Activated CD4-positive, alpha-beta T cell treated with anti-CD3 and anti-CD28 coated beads for 36 hours (primary cell): ENCODE measurements at regions of chr1 and their contacts with region 1.

Region 1: GRCh38 chr1:2044510-2045319 is 5.5 kb upstream of the PRKCZ start:
- DNase-seq: peak; percentile 88
- ATAC-seq: peak; percentile 82
- H3K4me3 Mint-ChIP-seq: peak overlapping the region; percentile 44
- H3K27ac Mint-ChIP-seq: no peak overlapping the region
- H3K4me1 Mint-ChIP-seq: peaks cover 21% of the 10 kb centered on the region
- H3K27me3 Mint-ChIP-seq: peaks cover 14% of the 10 kb centered on the region

Region 2: GRCh38 chr1:1683104-1683905 is 361.4 kb before region 1 on chr1:
- CTCF ChIA-PET with region 1: no interaction called
- POLR2A ChIA-PET with region 1: no interaction called
- intact Hi-C with region 1: no loop called
- DNase-seq: no peak
- ATAC-seq: no peak
- H3K4me3 Mint-ChIP-seq: no peak overlapping the region
- H3K27ac Mint-ChIP-seq: no peak overlapping the region
- H3K4me1 Mint-ChIP-seq: peaks cover 36% of the 10 kb centered on the region
- H3K27me3 Mint-ChIP-seq: no peaks in the 10 kb centered on the region

Region 3: GRCh38 chr1:1943834-1944570 is 100.7 kb before region 1 on chr1:
- CTCF ChIA-PET with region 1: interaction called, 9 read pairs
- POLR2A ChIA-PET with region 1: no interaction called
- intact Hi-C with region 1: loop called in 1 of 2 experiments (anchors 1 kb)
- DNase-seq: peak; percentile 79
- ATAC-seq: peak; percentile 98
- H3K4me3 Mint-ChIP-seq: no peak overlapping the region
- H3K27ac Mint-ChIP-seq: no peak overlapping the region
- H3K4me1 Mint-ChIP-seq: peaks cover 3% of the 10 kb centered on the region
- H3K27me3 Mint-ChIP-seq: peaks cover 1% of the 10 kb centered on the region

Region 4: DNA sequence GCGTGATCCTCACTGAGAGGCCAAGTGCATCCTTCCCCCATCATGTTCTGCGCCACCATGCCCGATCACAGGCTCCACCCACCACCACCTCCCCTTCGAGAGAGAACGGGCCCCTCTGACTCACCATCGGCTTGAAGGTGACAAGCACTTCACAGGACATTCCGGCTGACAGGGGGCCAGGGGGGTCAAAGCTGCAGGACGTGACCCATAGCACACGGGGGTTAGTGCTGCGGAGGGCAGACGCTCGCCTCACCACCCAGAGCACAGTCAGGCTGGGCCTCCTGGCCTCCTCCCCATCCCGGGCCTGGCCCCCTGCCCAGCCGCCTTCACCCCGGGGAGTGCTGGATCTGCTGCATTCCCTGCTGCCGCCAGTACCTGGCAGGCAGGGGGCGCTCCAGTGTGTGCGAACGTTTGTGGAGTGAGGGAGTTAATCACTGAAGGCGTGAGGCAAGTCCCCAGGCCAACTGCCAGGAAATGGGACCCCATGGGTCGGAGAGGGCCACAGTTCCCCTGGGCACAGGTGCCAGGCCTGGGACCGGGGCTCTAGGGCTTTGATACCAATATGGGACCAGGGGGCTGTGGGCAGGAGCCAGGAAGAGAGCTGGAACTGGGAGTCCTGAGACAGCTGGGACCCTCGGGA is 84.8 kb before region 1 on chr1:
- CTCF ChIA-PET with region 1: interaction called, 51 read pairs
- POLR2A ChIA-PET with region 1: no interaction called
- intact Hi-C with region 1: loop called (anchors 1 kb)
- DNase-seq: peak; percentile 93
- ATAC-seq: peak; percentile 93
- H3K4me3 Mint-ChIP-seq: no peak overlapping the region
- H3K27ac Mint-ChIP-seq: peak overlapping the region; percentile 67
- H3K4me1 Mint-ChIP-seq: peaks cover 11% of the 10 kb centered on the region
- H3K27me3 Mint-ChIP-seq: peaks cover 17% of the 10 kb centered on the region

Region 5: DNA sequence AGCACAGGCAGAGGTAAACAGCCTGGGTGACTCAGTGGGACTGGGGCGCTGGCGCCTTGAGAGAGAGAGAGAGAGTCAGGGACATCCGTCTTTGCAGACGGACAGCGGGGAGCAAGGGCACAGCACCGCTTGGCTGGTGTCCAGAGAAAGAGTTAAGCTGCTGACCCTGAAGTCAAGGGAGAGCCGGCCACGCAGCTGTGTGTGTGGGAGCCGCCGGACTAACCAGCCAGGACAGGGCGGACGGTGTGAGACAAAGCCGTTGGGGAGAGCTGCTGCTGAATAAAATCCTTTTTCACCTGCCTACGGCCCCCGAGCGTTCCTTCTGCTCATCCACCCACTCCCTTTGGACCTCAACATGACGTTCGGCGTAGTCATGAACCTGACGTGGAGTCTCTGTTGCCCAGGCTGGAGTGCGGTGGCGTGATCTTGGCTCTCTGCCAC is 55.6 kb before region 1 on chr1:
- CTCF ChIA-PET with region 1: interaction called, 10 read pairs
- POLR2A ChIA-PET with region 1: no interaction called
- intact Hi-C with region 1: no loop called
- DNase-seq: no peak
- ATAC-seq: no peak
- H3K4me3 Mint-ChIP-seq: no peak overlapping the region
- H3K27ac Mint-ChIP-seq: no peak overlapping the region
- H3K4me1 Mint-ChIP-seq: no peaks in the 10 kb centered on the region
- H3K27me3 Mint-ChIP-seq: no peaks in the 10 kb centered on the region